ENCODE measurements at regions of chr15 and their contacts with region 1.

Region 1: GRCh38 chr15:58070801-58071418 is 5.4 kb upstream of the ALDH1A2 start:
- DNase-seq: peak; percentile 13 to 14
- ATAC-seq: no peak
- H3K4me3 ChIP-seq: no peak overlapping the region
- H3K27ac ChIP-seq: no peak overlapping the region
- H3K4me1 ChIP-seq: peaks cover 0 to 6% of the 10 kb centered on the region in 2 donors
- H3K27me3 ChIP-seq: peaks cover 8 to 13% (median 9%) of the 10 kb centered on the region in 3 donors
- CTCF ChIP-seq: peak; percentile 40 to 78 (median 56)
- POLR2A ChIP-seq: no peak

Region 2: GRCh38 chr15:57732526-57733331 is 338.2 kb before region 1 on chr15:
- in situ Hi-C with region 1: loop called in 1 of 4 experiments (anchors 25 kb)
- intact Hi-C with region 1: no loop called
- DNase-seq: peak in 1 of 2 donors; percentile 21
- ATAC-seq: peak in 1 of 2 donors; percentile 42
- H3K4me3 ChIP-seq: no peak overlapping the region
- H3K27ac ChIP-seq: no peak overlapping the region
- H3K4me1 ChIP-seq: peaks cover 3 to 4% of the 10 kb centered on the region in 2 donors
- H3K27me3 ChIP-seq: no peaks in the 10 kb centered on the region
- CTCF ChIP-seq: peak; percentile 58 to 87 (median 65)
- POLR2A ChIP-seq: no peak

Region 3: DNA sequence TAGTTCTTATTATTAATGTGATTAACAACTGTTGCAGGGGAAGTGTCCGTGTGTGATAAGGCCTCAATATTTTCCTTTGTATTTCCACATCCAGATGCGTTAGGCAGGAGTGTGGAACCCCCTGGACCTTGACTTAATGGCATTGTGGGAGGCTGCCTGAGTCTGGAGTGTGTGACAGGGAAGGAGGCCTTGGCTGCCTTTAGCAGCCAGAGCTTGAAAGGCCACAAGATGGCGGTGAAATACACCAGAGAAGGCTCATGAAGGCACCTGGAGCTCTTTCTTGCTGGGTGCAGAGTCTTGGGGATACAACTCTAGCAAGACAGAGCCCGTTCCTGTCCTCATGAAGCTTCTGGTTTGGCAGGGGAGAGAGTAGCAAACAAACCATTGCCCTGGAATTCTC is 327.5 kb before region 1 on chr15:
- in situ Hi-C with region 1: loop called in 2 of 4 experiments (anchors 10 to 25 kb)
- intact Hi-C with region 1: no loop called
- DNase-seq: no peak
- ATAC-seq: no peak
- H3K4me3 ChIP-seq: no peak overlapping the region
- H3K27ac ChIP-seq: no peak overlapping the region
- H3K4me1 ChIP-seq: no peaks in the 10 kb centered on the region
- H3K27me3 ChIP-seq: no peaks in the 10 kb centered on the region
- CTCF ChIP-seq: no peak
- POLR2A ChIP-seq: no peak

Region 4: GRCh38 chr15:57751177-57751800 is 319.6 kb before region 1 on chr15:
- in situ Hi-C with region 1: loop called in 3 of 4 experiments (anchors 5 to 25 kb)
- intact Hi-C with region 1: no loop called
- DNase-seq: no peak
- ATAC-seq: no peak
- H3K4me3 ChIP-seq: no peak overlapping the region
- H3K27ac ChIP-seq: no peak overlapping the region
- H3K4me1 ChIP-seq: no peaks in the 10 kb centered on the region
- H3K27me3 ChIP-seq: no peaks in the 10 kb centered on the region
- CTCF ChIP-seq: peak in 1 of 5 experiments; percentile 17
- POLR2A ChIP-seq: no peak

Region 5: DNA sequence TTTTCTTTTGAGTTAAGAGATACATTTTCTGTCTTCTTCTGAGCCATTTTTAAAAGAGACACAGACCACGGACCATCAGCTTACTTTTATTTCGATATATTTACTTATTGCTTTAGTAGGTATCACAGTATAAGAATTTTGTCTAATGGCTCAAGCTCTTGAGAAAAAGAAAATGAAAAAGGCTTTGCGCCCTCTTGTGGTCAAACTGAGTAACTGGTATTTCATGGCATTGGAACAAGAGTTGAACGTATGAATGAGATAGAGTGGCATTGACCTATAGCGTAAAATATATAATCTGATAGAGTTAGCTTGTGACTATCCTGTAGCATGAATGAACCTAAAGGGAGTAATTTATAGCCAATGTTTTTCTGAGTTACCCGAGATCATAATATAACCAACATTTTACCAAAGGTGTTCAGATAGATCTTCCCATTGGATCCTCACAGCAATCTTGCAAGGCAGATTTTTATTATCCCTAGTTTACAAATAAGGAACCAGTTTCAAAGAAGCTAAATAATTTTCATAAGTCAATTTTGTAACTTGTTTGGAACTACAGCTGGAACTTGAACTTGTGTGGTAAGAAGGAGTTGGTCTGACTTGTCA is 209.8 kb before region 1 on chr15:
- in situ Hi-C with region 1: loop called (anchors 10 to 25 kb)
- intact Hi-C with region 1: loop called (anchors 5 kb)
- DNase-seq: no peak
- ATAC-seq: peak in 1 of 2 donors; percentile 29
- H3K4me3 ChIP-seq: no peak overlapping the region
- H3K27ac ChIP-seq: no peak overlapping the region
- H3K4me1 ChIP-seq: no peaks in the 10 kb centered on the region
- H3K27me3 ChIP-seq: no peaks in the 10 kb centered on the region
- CTCF ChIP-seq: peak; percentile 61 to 82 (median 81)
- POLR2A ChIP-seq: no peak

Region 6: DNA sequence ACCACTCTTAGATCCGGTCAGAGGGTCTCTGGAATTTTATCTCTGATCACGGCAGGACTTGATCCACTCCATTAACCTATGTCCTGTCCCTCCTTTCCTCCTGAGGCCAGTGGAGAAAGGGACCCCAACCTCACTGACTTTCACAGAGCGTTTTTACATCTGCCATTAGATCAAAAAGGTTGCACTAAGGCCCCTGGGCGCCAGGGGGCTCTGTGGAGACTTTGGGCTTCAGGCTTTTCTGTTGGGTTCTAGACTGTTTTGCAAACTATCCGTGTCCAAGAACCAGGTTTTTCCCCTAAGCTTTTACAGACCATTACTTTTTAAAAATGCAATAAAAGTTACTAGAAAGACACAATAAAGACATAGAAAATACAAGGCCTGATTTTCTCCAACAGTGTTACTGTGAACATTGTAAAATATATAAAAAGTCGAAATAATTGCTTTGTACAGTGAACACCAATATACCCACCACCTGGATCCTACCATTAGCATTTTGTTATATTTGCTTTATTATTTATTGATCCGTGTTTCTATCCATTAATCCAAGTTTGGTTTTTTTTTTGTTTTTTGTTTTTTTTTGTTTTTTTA is 204.7 kb before region 1 on chr15:
- in situ Hi-C with region 1: loop called (anchors 10 to 25 kb)
- intact Hi-C with region 1: loop called (anchors 5 kb)
- DNase-seq: no peak
- ATAC-seq: no peak
- H3K4me3 ChIP-seq: no peak overlapping the region
- H3K27ac ChIP-seq: no peak overlapping the region
- H3K4me1 ChIP-seq: no peaks in the 10 kb centered on the region
- H3K27me3 ChIP-seq: no peaks in the 10 kb centered on the region
- CTCF ChIP-seq: peak in 3 of 5 experiments; percentile 44 to 64 (median 55)
- POLR2A ChIP-seq: no peak